ENCODE measurements at regions of chr3 and their contacts with region 1.

Region 1: DNA sequence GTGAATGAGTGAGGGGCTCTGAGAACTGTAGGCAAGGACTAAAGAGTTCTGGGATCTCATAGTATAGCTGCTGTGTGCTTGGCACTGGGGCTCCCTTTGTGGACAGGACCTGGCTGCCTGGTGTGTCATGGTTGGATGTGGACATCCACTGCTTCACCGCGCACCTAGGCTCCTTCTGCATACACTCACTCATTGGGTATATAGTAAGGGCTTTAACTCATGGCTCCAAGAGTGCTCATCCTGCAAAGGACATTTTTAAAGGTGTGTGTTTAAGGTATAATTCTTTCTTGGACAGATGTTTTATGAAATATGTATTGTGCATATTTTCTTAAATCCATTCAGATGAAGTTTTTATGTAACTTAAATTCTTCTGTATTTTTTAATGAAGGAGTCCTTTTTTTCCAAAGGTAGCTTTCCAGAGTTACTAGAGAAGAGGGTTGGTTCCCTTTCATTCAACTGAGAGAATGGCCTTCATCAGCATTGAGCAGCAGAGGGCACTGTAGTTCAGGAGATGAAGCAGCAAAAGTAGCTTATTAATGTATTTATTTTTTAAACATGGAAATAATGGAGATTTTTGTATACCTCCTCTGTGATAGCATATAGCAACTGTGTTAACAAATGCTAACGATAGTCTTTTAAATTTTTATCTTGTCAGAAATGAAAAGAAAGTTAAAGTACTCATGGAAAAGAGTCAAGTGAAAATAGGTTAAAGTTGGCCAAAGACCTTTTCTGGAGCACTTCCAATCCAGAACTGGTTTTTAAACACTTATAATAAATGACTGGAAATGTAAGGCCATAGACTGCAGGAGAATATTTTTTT is 25.2 kb downstream of the OXNAD1 start:
- DNase-seq: peak in 7 of 9 experiments; percentile 38 to 78 (median 62)
- ATAC-seq: peak; percentile 7
- H3K4me3 ChIP-seq: peak overlapping the region; percentile 70 to 71
- H3K4me3 Mint-ChIP-seq: peak overlapping the region; percentile 91
- H3K27ac ChIP-seq: peak overlapping the region; percentile 81 to 86
- H3K27ac Mint-ChIP-seq: peak overlapping the region; percentile 95
- H3K4me1 ChIP-seq: peaks cover 39% of the 10 kb centered on the region
- H3K4me1 Mint-ChIP-seq: peaks cover 71% of the 10 kb centered on the region
- H3K27me3 ChIP-seq: no peaks in the 10 kb centered on the region
- H3K27me3 Mint-ChIP-seq: no peaks in the 10 kb centered on the region
- CTCF ChIP-seq: peak; percentile 98

Region 2: GRCh38 chr3:16300881-16301359 is 10.7 kb after region 1 on chr3:
- CTCF ChIA-PET with region 1: interaction called, 113 read pairs
- POLR2A ChIA-PET with region 1: interaction called, 32 read pairs
- intact Hi-C with region 1: loop called in 1 of 2 experiments (anchors 1 kb)
- DNase-seq: peak in 8 of 9 experiments; percentile 44 to 89 (median 65)
- ATAC-seq: peak; percentile 66
- H3K4me3 ChIP-seq: peak overlapping the region; percentile 20 to 32
- H3K4me3 Mint-ChIP-seq: peak overlapping the region; percentile 87
- H3K27ac ChIP-seq: peak overlapping the region; percentile 37 to 74
- H3K27ac Mint-ChIP-seq: peak overlapping the region; percentile 95
- H3K4me1 ChIP-seq: peaks cover 94% of the 10 kb centered on the region
- H3K4me1 Mint-ChIP-seq: peaks cover 95% of the 10 kb centered on the region
- H3K27me3 ChIP-seq: no peaks in the 10 kb centered on the region
- H3K27me3 Mint-ChIP-seq: no peaks in the 10 kb centered on the region
- CTCF ChIP-seq: no peak

Region 3: DNA sequence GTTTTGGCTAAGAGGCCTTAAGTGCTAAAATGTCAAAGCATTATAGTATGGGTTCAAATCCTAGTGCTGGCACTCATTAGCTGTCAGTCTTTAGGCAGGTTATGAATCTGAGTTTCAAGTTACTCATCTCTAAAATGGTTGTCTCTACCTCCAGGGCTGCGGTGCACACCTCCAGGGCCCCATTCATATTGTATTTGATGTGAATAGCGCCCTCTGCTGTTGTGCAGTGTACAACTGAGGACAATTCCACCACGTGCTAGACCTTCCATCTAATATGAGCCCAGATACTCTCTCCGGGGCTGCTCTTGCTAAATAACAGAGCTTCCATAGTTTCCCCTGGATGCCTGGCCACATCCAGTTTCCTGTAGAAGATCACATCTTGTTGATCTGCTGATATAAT is 29.1 kb after region 1 on chr3:
- CTCF ChIA-PET with region 1: interaction called, 388 read pairs
- POLR2A ChIA-PET with region 1: interaction called, 32 read pairs
- intact Hi-C with region 1: loop called (anchors 1 kb)
- DNase-seq: peak; percentile 56 to 89 (median 82)
- ATAC-seq: peak; percentile 77
- H3K4me3 ChIP-seq: no peak overlapping the region
- H3K4me3 Mint-ChIP-seq: no peak overlapping the region
- H3K27ac ChIP-seq: peak overlapping the region in 1 of 2 experiments; percentile 62
- H3K27ac Mint-ChIP-seq: peak overlapping the region; percentile 95
- H3K4me1 ChIP-seq: peaks cover 65% of the 10 kb centered on the region
- H3K4me1 Mint-ChIP-seq: peaks cover 85% of the 10 kb centered on the region
- H3K27me3 ChIP-seq: no peaks in the 10 kb centered on the region
- H3K27me3 Mint-ChIP-seq: no peaks in the 10 kb centered on the region
- CTCF ChIP-seq: peak; percentile 66

Region 4: DNA sequence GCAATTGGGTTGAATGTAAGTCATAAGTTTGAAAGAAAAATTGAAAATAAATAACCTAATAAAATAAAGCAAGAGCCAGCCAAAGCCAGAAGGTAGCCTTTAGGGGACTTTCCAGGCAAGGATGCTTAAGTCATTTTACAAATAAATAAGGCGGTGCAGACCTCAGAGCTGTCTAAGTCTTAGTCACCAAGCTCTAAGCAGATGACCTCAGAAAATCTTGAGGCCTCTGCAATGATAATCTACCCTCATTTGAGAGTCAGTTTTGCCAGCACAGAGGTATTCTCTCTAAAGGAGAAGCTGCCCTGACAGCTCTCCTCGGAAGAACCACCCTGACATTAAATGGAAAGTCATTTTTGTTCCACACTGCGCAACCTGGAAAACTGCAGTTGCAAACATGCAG is 88.7 kb after region 1 on chr3:
- CTCF ChIA-PET with region 1: interaction called, 5 read pairs
- POLR2A ChIA-PET with region 1: interaction called, 5 read pairs
- intact Hi-C with region 1: loop called in 1 of 2 experiments (anchors 5 kb)
- DNase-seq: peak in 2 of 9 experiments; percentile 42 to 54
- ATAC-seq: peak; percentile 28
- H3K4me3 ChIP-seq: no peak overlapping the region
- H3K4me3 Mint-ChIP-seq: peak overlapping the region; percentile 35
- H3K27ac ChIP-seq: peak overlapping the region in 1 of 2 experiments; percentile 17
- H3K27ac Mint-ChIP-seq: peak overlapping the region; percentile 88
- H3K4me1 ChIP-seq: peaks cover 62% of the 10 kb centered on the region
- H3K4me1 Mint-ChIP-seq: peaks cover 95% of the 10 kb centered on the region
- H3K27me3 ChIP-seq: no peaks in the 10 kb centered on the region
- H3K27me3 Mint-ChIP-seq: no peaks in the 10 kb centered on the region
- CTCF ChIP-seq: no peak

Region 5: GRCh38 chr3:16511681-16512434 is 221.6 kb after region 1 on chr3:
- CTCF ChIA-PET with region 1: interaction called, 14 read pairs
- POLR2A ChIA-PET with region 1: interaction called, 6 read pairs
- intact Hi-C with region 1: loop called (anchors 1 to 2 kb)
- DNase-seq: peak; percentile 59 to 97 (median 78)
- ATAC-seq: peak; percentile 75
- H3K4me3 ChIP-seq: peak overlapping the region; percentile 86 to 92
- H3K4me3 Mint-ChIP-seq: peak overlapping the region; percentile 96
- H3K27ac ChIP-seq: peak overlapping the region; percentile 78 to 92
- H3K27ac Mint-ChIP-seq: peak overlapping the region; percentile 86
- H3K4me1 ChIP-seq: peaks cover 79% of the 10 kb centered on the region
- H3K4me1 Mint-ChIP-seq: peaks cover 85% of the 10 kb centered on the region
- H3K27me3 ChIP-seq: no peaks in the 10 kb centered on the region
- H3K27me3 Mint-ChIP-seq: no peaks in the 10 kb centered on the region
- CTCF ChIP-seq: no peak

Region 6: DNA sequence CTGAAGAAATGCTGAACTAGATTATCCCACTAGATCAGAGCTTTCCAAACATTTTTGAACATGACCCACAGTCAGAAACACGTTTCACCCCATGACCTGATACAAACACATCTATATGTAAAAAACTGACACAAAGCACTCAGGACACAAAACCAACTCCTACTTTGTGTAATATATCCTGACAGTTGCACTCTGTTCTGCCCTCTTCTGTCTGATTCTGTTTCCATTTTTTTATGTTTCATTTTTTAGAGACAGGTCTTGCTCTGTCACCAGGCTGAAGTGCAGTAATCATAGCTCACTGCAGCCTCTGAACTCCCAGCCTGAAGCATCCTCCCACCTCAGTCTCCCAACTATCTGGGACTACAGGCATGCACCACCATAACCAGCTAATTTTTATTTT is 239.0 kb after region 1 on chr3:
- CTCF ChIA-PET with region 1: interaction called, 39 read pairs
- POLR2A ChIA-PET with region 1: interaction called, 4 read pairs
- intact Hi-C with region 1: loop called (anchors 1 kb)
- DNase-seq: peak in 2 of 9 experiments; percentile 40 to 61
- ATAC-seq: peak; percentile 77
- H3K4me3 ChIP-seq: no peak overlapping the region
- H3K4me3 Mint-ChIP-seq: no peak overlapping the region
- H3K27ac ChIP-seq: no peak overlapping the region
- H3K27ac Mint-ChIP-seq: peak overlapping the region; percentile 2
- H3K4me1 ChIP-seq: peaks cover 6% of the 10 kb centered on the region
- H3K4me1 Mint-ChIP-seq: peaks cover 10% of the 10 kb centered on the region
- H3K27me3 ChIP-seq: no peaks in the 10 kb centered on the region
- H3K27me3 Mint-ChIP-seq: no peaks in the 10 kb centered on the region
- CTCF ChIP-seq: peak; percentile 40

Region 7: GRCh38 chr3:16550676-16551341 is 260.6 kb after region 1 on chr3:
- CTCF ChIA-PET with region 1: interaction called, 47 read pairs
- POLR2A ChIA-PET with region 1: interaction called, 4 read pairs
- intact Hi-C with region 1: loop called (anchors 1 kb)
- DNase-seq: peak; percentile 51 to 89 (median 73)
- ATAC-seq: peak; percentile 100
- H3K4me3 ChIP-seq: no peak overlapping the region
- H3K4me3 Mint-ChIP-seq: no peak overlapping the region
- H3K27ac ChIP-seq: no peak overlapping the region
- H3K27ac Mint-ChIP-seq: peak overlapping the region; percentile 60
- H3K4me1 ChIP-seq: no peaks in the 10 kb centered on the region
- H3K4me1 Mint-ChIP-seq: peaks cover 3% of the 10 kb centered on the region
- H3K27me3 ChIP-seq: no peaks in the 10 kb centered on the region
- H3K27me3 Mint-ChIP-seq: no peaks in the 10 kb centered on the region
- CTCF ChIP-seq: peak; percentile 87